Head of caudate nucleus (tissue), 42 donors: ENCODE measurements at regions of chr1 and their contacts with region 1.

Region 1: DNA sequence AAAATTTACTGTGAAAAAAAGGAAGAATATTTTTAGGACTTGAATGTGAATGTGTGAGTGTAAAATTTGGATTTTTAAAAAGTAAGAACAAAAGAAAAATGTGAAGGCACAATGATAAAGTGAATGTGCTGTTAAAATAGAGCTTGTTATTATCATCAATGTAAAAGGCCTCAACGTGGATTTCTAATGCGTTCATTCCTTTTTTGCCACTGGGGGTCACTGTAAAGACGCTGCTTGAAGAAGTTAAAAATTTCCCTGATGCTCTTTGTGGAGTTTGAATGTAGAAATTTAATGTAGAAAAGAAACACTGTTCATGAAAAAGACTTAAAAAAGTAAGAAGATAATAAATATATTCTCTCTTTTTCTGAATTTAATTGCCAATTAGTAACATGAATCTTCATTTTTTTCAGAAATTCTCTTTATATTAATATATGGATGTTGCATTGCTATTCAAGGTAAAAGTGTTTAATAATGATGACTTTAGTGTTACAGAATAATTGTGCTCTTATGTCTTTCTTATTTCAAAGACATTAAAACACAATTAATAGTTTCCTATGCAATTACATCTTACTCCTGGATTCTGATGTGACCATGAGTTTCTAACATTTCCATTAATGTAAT is 161.5 kb downstream of the DNM3 start:
- DNase-seq: peak in 22 of 42 donors; percentile 15 to 78 (median 43)

Region 2: DNA sequence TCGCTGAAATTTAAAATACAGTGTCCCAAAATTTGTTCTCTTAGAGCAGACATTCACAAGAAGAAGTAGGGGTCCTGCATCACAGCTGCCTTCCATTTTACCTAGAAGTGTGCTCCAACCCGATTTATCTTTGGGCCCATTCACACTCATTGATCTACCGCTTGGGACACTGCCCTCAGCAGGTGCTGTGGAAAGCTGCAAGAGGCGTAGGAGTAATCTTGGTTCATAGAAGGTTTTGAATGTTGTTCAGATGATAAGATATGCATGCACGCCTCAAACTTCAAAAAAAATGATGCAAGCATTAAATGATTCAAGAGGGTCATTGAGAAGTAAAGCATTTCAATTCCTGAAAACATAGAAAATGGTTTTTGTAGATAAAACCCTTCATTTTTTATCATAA is 399.1 kb after region 1 on chr1:
- intact Hi-C with region 1: loop called (anchors 5 kb)
- DNase-seq: no peak

Region 3: GRCh38 chr1:172429331-172430127 is 426.7 kb after region 1 on chr1:
- intact Hi-C with region 1: loop called (anchors 10 kb)
- DNase-seq: peak in 18 of 42 donors; percentile 22 to 72 (median 43)